ENCODE measurements at regions of chr18 and their contacts with region 1.

Region 1: DNA sequence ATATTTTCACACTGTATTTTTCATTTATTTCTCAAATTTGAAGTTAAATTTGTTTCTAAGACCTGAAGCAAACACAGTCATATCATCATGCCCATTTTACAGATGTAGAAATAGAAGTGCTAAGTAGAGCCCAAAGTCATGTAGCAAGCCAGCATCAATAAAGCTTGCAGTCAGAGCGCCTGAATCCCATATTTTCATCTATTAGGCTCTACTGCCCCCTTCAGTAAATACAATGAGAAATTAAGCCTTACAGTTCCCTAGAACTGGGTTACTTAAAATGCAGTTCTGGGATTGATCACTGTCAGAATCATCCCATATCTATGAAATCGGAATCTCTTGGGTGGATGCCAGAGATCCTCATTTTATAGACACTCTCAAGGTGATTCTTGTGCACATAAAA is 419.9 kb downstream of the TGIF1 start:
- DNase-seq: peak in 2 of 4 donors; percentile 25 to 45
- ATAC-seq: peak; percentile 91
- H3K4me3 ChIP-seq: no peak overlapping the region
- H3K27ac ChIP-seq: no peak overlapping the region
- H3K4me1 ChIP-seq: peaks cover 0 to 6% of the 10 kb centered on the region in 2 donors
- H3K27me3 ChIP-seq: no peaks in the 10 kb centered on the region
- CTCF ChIP-seq: peak; percentile 42 to 48

Region 2: DNA sequence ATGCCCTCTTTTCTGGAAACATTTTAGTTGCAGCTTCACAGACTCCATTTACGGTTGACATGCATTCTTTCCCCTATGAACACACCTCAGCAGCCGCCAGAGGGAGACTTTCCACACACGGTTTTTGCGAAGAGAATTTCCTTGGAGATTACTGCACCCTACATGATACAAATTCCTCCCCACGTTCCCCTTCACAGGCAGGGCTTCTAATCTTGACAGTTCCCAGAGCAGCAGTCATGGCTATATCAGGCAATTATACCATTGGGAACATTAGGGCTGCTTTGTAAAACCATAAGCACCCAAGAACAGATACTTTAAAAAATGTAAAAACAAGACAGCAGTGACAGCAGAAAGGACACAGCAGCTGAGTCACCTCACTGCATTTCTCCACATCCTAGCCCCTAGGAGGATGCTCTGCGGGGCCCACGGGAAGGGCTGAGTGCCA is 166.1 kb before region 1 on chr18:
- intact Hi-C with region 1: loop called in 1 of 2 experiments (anchors 10 kb)
- DNase-seq: peak in 3 of 4 donors; percentile 54 to 73 (median 71)
- ATAC-seq: peak; percentile 87
- H3K4me3 ChIP-seq: no peak overlapping the region
- H3K27ac ChIP-seq: no peak overlapping the region
- H3K4me1 ChIP-seq: peaks cover 3 to 20% of the 10 kb centered on the region in 2 donors
- H3K27me3 ChIP-seq: no peaks in the 10 kb centered on the region
- CTCF ChIP-seq: peak; percentile 56 to 58

Region 3: GRCh38 chr18:3771121-3771971 is 98.5 kb before region 1 on chr18:
- intact Hi-C with region 1: loop called in 1 of 2 experiments (anchors 10 kb)
- DNase-seq: peak; percentile 84 to 96 (median 90)
- ATAC-seq: peak; percentile 100
- H3K4me3 ChIP-seq: peak overlapping the region; percentile 6 to 16
- H3K27ac ChIP-seq: peak overlapping the region; percentile 39 to 72
- H3K4me1 ChIP-seq: peaks cover 5 to 18% of the 10 kb centered on the region in 2 donors
- H3K27me3 ChIP-seq: no peaks in the 10 kb centered on the region
- CTCF ChIP-seq: peak; percentile 93 to 97

Region 4: DNA sequence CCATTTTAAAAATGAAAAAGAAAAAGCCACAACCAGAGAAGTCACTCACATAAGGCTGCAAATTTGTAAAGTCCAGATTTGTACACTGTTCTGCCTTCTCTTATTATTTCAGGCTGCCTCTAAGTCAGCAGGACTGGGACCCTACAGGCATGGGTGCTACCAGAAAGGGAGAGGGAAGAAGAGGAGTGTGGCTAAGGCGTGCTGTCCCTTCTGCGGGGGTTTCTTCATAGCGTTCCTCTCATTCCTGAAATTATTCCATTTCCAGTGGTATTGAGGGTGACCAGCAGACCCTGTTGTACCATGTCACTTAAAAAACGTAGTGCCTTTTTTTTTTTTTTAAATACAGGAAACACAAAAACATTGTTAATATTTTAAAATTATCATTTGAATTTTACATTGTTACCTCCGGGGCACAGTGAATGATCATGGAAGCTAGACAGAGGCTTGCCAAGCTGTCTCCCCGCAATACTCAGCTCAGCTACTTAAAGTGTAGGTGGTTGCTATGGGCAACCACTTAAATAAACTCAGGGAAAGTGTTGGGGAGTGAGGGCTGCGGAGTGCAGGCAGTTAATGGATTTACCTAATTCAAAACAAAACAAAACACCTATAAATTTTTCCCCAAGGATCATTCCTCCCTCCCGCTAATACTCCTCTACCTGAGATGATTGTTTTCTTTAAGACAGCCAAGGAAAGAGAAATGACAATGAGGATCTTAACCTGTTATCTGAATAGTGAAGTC is 70.5 kb before region 1 on chr18:
- intact Hi-C with region 1: no loop called
- DNase-seq: peak in 1 of 4 donors; percentile 53
- ATAC-seq: peak; percentile 91
- H3K4me3 ChIP-seq: no peak overlapping the region
- H3K27ac ChIP-seq: no peak overlapping the region
- H3K4me1 ChIP-seq: no peaks in the 10 kb centered on the region
- H3K27me3 ChIP-seq: no peaks in the 10 kb centered on the region
- CTCF ChIP-seq: no peak